OCI-LY7 (cell line): ENCODE measurements at regions of chr2 and their contacts with region 1.

Region 1: GRCh38 chr2:44462934-44463849 is 101.4 kb downstream of the CAMKMT start:
- DNase-seq: no peak
- H3K4me3 ChIP-seq: no peak overlapping the region
- H3K27ac ChIP-seq: no peak overlapping the region
- H3K4me1 ChIP-seq: no peaks in the 10 kb centered on the region
- CTCF ChIP-seq: no peak

Region 2: GRCh38 chr2:44420725-44421124 is 42.5 kb before region 1 on chr2:
- CTCF ChIA-PET with region 1: no interaction called
- POLR2A ChIA-PET with region 1: no interaction called
- intact Hi-C with region 1: loop called (anchors 2 kb)
- DNase-seq: no peak
- H3K4me3 ChIP-seq: no peak overlapping the region
- H3K27ac ChIP-seq: no peak overlapping the region
- H3K4me1 ChIP-seq: no peaks in the 10 kb centered on the region
- CTCF ChIP-seq: no peak